Naive thymus-derived CD4-positive, alpha-beta T cell (primary cell): ENCODE measurements at regions of chr10 and their contacts with region 1.

Region 1: GRCh38 chr10:99732033-99732912 is at the starts of genes COX15 and CUTC:
- DNase-seq: peak; percentile 89 to 95 (median 94)
- ATAC-seq: peak; percentile 95
- H3K4me3 ChIP-seq: peak within 1 kb of the TSS; percentile 94
- H3K4me3 Mint-ChIP-seq: peak within 1 kb of the TSS; percentile 95 to 100 (median 98)
- H3K27ac ChIP-seq: peak within 1 kb of the TSS; percentile 83
- H3K27ac Mint-ChIP-seq: peak within 1 kb of the TSS; percentile 98 to 100 (median 99)
- H3K4me1 ChIP-seq: peaks cover 11 to 19% of the 10 kb centered on the region in 2 donors
- H3K4me1 Mint-ChIP-seq: peaks cover 28 to 79% (median 52%) of the 10 kb centered on the region in 7 donors
- H3K27me3 ChIP-seq: no peaks in the 10 kb centered on the region
- H3K27me3 Mint-ChIP-seq: no peaks in the 10 kb centered on the region
- total RNA-seq, gene COX15: 17.6 to 43.5 (median 32.9) TPM
- total RNA-seq, gene CUTC: 19.3 to 37.1 (median 25.0) TPM

Region 2: GRCh38 chr10:98446661-98447221 is 1285.5 kb before region 1 on chr10 and contains the start of gene HPS1:
- CTCF ChIA-PET with region 1: no interaction called
- POLR2A ChIA-PET with region 1: no interaction called
- intact Hi-C with region 1: loop called in 1 of 2 experiments (anchors 1 kb)
- DNase-seq: peak; percentile 60 to 88 (median 79)
- ATAC-seq: peak; percentile 93
- H3K4me3 ChIP-seq: peak within 1 kb of the TSS; percentile 87
- H3K4me3 Mint-ChIP-seq: peak within 1 kb of the TSS; percentile 76 to 96 (median 92)
- H3K27ac ChIP-seq: peak within 1 kb of the TSS; percentile 88
- H3K27ac Mint-ChIP-seq: peak within 1 kb of the TSS; percentile 75 to 97 (median 89)
- H3K4me1 ChIP-seq: peaks cover 19 to 21% of the 10 kb centered on the region in 2 donors
- H3K4me1 Mint-ChIP-seq: peaks cover 18 to 56% (median 44%) of the 10 kb centered on the region in 7 donors
- H3K27me3 ChIP-seq: no peaks in the 10 kb centered on the region
- H3K27me3 Mint-ChIP-seq: peaks cover 0 to 20% (median 6%) of the 10 kb centered on the region in 5 donors
- total RNA-seq, gene HPS1: 68.5 to 107 (median 90.9) TPM

Region 3: GRCh38 chr10:99279593-99280111 is 452.6 kb before region 1 on chr10:
- CTCF ChIA-PET with region 1: no interaction called
- POLR2A ChIA-PET with region 1: no interaction called
- intact Hi-C with region 1: no loop called
- DNase-seq: no peak
- ATAC-seq: no peak
- H3K4me3 ChIP-seq: no peak overlapping the region
- H3K4me3 Mint-ChIP-seq: no peak overlapping the region
- H3K27ac ChIP-seq: no peak overlapping the region
- H3K27ac Mint-ChIP-seq: no peak overlapping the region
- H3K4me1 ChIP-seq: no peaks in the 10 kb centered on the region
- H3K4me1 Mint-ChIP-seq: no peaks in the 10 kb centered on the region
- H3K27me3 ChIP-seq: peaks cover 0 to 4% of the 10 kb centered on the region in 2 donors
- H3K27me3 Mint-ChIP-seq: peaks cover 13 to 36% (median 27%) of the 10 kb centered on the region in 5 donors

Region 4: DNA sequence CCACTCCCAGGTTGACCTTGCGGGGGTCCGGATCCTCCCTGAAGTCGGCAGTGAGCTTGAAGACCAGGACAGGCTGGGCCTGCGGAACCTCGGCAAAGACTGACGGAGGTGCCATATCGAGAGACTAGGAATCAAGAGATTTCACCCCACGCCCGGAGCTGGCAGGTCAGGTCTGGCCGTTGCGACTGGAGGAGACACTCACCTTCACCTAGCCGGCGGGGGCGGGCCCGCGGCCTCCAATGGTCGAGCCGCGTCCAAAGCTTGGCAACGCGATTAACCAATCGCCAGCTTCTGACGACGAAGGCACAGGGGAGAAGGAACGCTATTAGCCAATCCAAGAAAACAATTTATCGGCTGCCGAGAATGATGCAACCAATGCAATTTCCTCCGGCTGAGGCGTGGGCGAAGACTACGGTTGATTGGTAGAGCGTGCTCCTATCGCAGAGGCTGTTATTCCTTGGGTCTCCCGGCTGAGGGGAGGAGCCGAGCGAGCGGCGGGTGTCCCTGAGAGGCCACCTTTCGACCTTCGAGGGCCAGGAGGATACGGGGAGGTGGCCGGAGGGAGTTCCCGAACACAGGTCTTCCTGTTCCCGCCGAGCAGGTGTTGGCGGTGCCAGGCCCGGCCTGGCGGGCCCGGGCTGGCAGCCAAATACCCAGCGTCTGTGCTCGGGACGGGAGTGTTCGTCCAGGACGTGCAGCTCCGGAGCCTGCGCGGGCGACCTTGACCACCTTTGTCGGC is 301.7 kb before region 1 on chr10 and contains the start of gene GOT1:
- CTCF ChIA-PET with region 1: interaction called, 3 read pairs
- POLR2A ChIA-PET with region 1: interaction called, 4 read pairs
- intact Hi-C with region 1: loop called (anchors 1 kb)
- DNase-seq: peak; percentile 72 to 95 (median 94)
- ATAC-seq: peak; percentile 97
- H3K4me3 ChIP-seq: peak within 1 kb of the TSS; percentile 81
- H3K4me3 Mint-ChIP-seq: peak within 1 kb of the TSS; percentile 94 to 100 (median 98)
- H3K27ac ChIP-seq: peak within 1 kb of the TSS; percentile 90
- H3K27ac Mint-ChIP-seq: peak within 1 kb of the TSS; percentile 88 to 97 (median 94)
- H3K4me1 ChIP-seq: peaks cover 5 to 9% of the 10 kb centered on the region in 2 donors
- H3K4me1 Mint-ChIP-seq: peaks cover 19 to 53% (median 44%) of the 10 kb centered on the region in 7 donors
- H3K27me3 ChIP-seq: no peaks in the 10 kb centered on the region
- H3K27me3 Mint-ChIP-seq: no peaks in the 10 kb centered on the region
- total RNA-seq, gene GOT1: 8.0 to 22.2 (median 10.2) TPM

Region 5: DNA sequence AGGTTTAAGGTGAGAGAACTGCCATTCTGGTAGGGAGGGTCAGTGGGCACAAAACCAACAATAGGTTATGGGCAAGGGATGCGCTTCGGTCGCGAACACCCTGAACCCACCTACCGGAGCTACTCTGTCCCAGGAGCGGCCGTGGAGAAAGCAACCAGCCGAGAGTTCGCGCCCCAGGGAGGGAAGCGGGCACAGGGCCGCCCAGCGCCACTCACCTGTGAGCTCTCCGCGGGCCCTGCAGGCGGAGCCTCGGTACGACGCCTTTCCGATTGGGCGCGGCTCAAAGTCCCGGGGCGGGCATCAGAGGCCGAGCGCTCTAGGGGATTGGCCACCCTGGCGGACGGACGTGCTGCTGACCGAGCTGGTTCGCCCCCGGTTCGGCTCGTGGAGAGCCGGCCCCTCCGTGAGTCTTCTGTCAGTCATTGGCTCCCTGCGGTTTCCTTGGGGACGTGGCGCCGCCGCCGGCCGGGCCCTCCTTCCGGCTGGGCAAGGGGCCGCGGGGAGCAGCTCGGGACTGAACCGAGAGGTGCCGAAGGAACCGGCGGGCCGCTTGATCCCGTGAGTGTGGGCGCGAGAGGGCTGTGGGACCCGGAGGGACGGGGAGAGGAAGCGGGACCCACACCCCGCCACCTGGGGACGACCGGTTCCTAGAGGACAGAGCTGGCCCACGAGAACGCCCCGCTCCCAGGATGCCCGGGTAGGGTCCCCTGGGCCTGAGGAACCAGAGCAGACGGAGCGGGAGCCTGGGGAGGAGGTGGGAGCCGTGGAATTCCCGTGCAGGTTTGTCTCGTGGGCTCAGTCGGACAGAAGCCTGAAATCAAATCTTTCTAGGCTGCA is 73.0 kb before region 1 on chr10 and contains the start of gene ENTPD7:
- CTCF ChIA-PET with region 1: no interaction called
- POLR2A ChIA-PET with region 1: interaction called, 4 read pairs
- intact Hi-C with region 1: loop called (anchors 1 kb)
- DNase-seq: peak; percentile 66 to 90 (median 77)
- ATAC-seq: peak; percentile 99
- H3K4me3 ChIP-seq: peak within 1 kb of the TSS; percentile 72
- H3K4me3 Mint-ChIP-seq: peak within 1 kb of the TSS; percentile 80 to 95 (median 92)
- H3K27ac ChIP-seq: peak within 1 kb of the TSS; percentile 69
- H3K27ac Mint-ChIP-seq: peak within 1 kb of the TSS; percentile 5 to 88 (median 73)
- H3K4me1 ChIP-seq: no peaks in the 10 kb centered on the region
- H3K4me1 Mint-ChIP-seq: peaks cover 17 to 32% (median 21%) of the 10 kb centered on the region in 7 donors
- H3K27me3 ChIP-seq: no peaks in the 10 kb centered on the region
- H3K27me3 Mint-ChIP-seq: peaks cover 0 to 25% (median 15%) of the 10 kb centered on the region in 5 donors
- total RNA-seq, gene ENTPD7: 2.5 to 6.6 (median 3.4) TPM

Region 6: GRCh38 chr10:99761365-99761764 is 29.1 kb after region 1 on chr10:
- CTCF ChIA-PET with region 1: no interaction called
- POLR2A ChIA-PET with region 1: no interaction called
- intact Hi-C with region 1: no loop called
- DNase-seq: no peak
- ATAC-seq: no peak
- H3K4me3 ChIP-seq: no peak overlapping the region
- H3K4me3 Mint-ChIP-seq: no peak overlapping the region
- H3K27ac ChIP-seq: no peak overlapping the region
- H3K27ac Mint-ChIP-seq: no peak overlapping the region
- H3K4me1 ChIP-seq: peaks cover 0 to 4% of the 10 kb centered on the region in 2 donors
- H3K4me1 Mint-ChIP-seq: no peaks in the 10 kb centered on the region
- H3K27me3 ChIP-seq: no peaks in the 10 kb centered on the region
- H3K27me3 Mint-ChIP-seq: no peaks in the 10 kb centered on the region

Region 7: GRCh38 chr10:100267237-100268104 is 535.2 kb after region 1 on chr10 and contains the start of gene CWF19L1:
- CTCF ChIA-PET with region 1: no interaction called
- POLR2A ChIA-PET with region 1: no interaction called
- intact Hi-C with region 1: loop called in 1 of 2 experiments (anchors 1 kb)
- DNase-seq: peak; percentile 39 to 74 (median 64)
- ATAC-seq: peak; percentile 91
- H3K4me3 ChIP-seq: peak within 1 kb of the TSS; percentile 93
- H3K4me3 Mint-ChIP-seq: peak within 1 kb of the TSS; percentile 89 to 100 (median 100)
- H3K27ac ChIP-seq: peak within 1 kb of the TSS; percentile 96
- H3K27ac Mint-ChIP-seq: peak within 1 kb of the TSS; percentile 95 to 100 (median 99)
- H3K4me1 ChIP-seq: peaks cover 12 to 21% of the 10 kb centered on the region in 2 donors
- H3K4me1 Mint-ChIP-seq: peaks cover 17 to 40% (median 27%) of the 10 kb centered on the region in 7 donors
- H3K27me3 ChIP-seq: no peaks in the 10 kb centered on the region
- H3K27me3 Mint-ChIP-seq: no peaks in the 10 kb centered on the region
- total RNA-seq, gene CWF19L1: 41.8 to 46.8 (median 42.6) TPM